ENCODE measurements at regions of chr18 and their contacts with region 1.

Region 1: GRCh38 chr18:34661464-34662111 is 48.5 kb upstream of the DTNA start:
- DNase-seq: peak; percentile 7
- H3K4me3 ChIP-seq: no peak overlapping the region
- H3K27ac ChIP-seq: no peak overlapping the region
- H3K27me3 ChIP-seq: no peaks in the 10 kb centered on the region
- CTCF ChIP-seq: peak; percentile 90

Region 2: GRCh38 chr18:34600118-34600517 is 61.5 kb before region 1 on chr18:
- CTCF ChIA-PET with region 1: interaction called, 12 read pairs
- POLR2A ChIA-PET with region 1: no interaction called
- DNase-seq: no peak
- H3K4me3 ChIP-seq: no peak overlapping the region
- H3K27ac ChIP-seq: no peak overlapping the region
- H3K27me3 ChIP-seq: no peaks in the 10 kb centered on the region
- CTCF ChIP-seq: no peak

Region 3: DNA sequence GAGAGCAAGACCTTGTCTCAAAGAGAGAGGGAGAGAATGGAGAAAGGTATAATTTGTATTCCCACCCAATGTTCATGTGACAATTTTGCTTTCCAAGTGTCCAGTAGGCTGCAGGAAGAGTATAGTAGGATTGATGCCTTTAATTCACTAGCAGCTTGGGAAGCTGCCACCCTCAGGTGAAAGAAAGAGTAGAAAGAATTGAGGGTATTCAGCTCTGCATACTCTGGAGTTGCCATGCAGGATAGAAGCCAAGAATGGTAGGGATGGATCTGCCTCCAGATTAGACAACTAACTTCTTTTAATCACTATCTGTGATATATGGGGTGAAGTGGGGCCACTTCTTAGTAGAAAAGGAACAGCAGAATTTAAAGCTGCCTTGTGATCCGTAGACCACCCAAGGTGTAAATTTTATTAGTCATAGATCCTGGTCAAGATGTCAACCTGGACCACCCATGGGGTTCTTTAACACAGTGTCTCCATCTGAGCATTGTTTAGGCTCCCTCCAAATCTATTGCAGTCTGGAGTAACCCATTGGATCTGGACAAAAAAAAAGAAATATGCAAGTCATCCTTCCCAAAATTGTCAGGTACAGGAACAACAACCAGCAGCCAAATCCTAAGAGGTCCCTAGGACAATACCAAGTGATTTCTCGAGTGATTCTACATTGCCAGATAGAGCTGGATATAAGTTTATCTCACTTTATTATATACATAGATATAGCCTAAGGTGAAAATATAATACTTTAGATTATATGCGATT is 15.4 kb after region 1 on chr18:
- CTCF ChIA-PET with region 1: interaction called, 84 read pairs
- POLR2A ChIA-PET with region 1: no interaction called
- DNase-seq: no peak
- H3K4me3 ChIP-seq: no peak overlapping the region
- H3K27ac ChIP-seq: no peak overlapping the region
- H3K27me3 ChIP-seq: no peaks in the 10 kb centered on the region
- CTCF ChIP-seq: no peak

Region 4: DNA sequence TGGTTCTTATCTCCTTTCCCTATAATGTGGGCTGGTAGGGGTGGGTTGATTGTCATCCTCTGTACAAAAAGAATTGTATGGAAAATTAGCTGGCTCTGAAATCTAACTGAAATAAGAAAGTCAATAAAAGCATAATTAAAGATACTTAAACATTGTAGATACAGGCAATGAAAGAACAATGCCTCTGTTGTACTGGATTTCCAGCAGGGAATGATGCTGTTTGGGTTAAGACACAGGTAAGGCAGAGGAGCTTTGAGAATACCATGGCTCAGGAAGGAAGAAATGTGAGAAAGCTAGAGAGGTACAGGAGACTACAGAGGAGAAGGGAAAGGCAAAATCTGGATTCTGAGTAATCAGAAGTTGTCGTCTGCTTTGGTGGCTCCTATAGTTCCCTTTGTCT is 58.6 kb after region 1 on chr18:
- CTCF ChIA-PET with region 1: interaction called, 17 read pairs
- POLR2A ChIA-PET with region 1: no interaction called
- DNase-seq: no peak
- H3K4me3 ChIP-seq: no peak overlapping the region
- H3K27ac ChIP-seq: no peak overlapping the region
- H3K27me3 ChIP-seq: no peaks in the 10 kb centered on the region
- CTCF ChIP-seq: no peak

Region 5: GRCh38 chr18:34752056-34752455 is 90.5 kb after region 1 on chr18:
- CTCF ChIA-PET with region 1: interaction called, 16 read pairs
- POLR2A ChIA-PET with region 1: no interaction called
- DNase-seq: no peak
- H3K4me3 ChIP-seq: no peak overlapping the region
- H3K27ac ChIP-seq: no peak overlapping the region
- H3K27me3 ChIP-seq: no peaks in the 10 kb centered on the region
- CTCF ChIP-seq: no peak

Region 6: DNA sequence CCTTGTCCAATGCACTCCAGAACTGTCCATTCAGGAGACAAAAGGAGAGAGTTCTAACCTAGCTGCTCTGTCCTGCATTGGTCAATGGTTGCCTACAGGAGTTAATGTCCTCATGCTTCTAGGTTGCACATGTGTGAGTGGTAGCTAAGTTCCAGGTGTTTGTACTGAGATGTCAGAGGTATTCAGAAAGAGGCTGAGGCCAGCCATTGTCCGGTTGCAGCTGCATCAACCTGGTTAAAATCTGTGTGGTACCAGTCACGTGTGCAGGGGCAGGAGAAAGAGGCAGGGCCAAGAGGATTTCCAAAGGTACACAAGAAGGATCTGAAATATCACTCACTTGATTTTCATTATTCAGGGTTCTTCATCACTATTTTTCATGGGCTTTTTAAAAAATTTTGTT is 119.3 kb after region 1 on chr18:
- CTCF ChIA-PET with region 1: interaction called, 199 read pairs
- POLR2A ChIA-PET with region 1: interaction called, 3 read pairs
- DNase-seq: no peak
- H3K4me3 ChIP-seq: no peak overlapping the region
- H3K27ac ChIP-seq: no peak overlapping the region
- H3K27me3 ChIP-seq: no peaks in the 10 kb centered on the region
- CTCF ChIP-seq: no peak

Region 7: GRCh38 chr18:34809451-34810072 is 148.0 kb after region 1 on chr18:
- CTCF ChIA-PET with region 1: interaction called, 20 read pairs
- POLR2A ChIA-PET with region 1: no interaction called
- DNase-seq: no peak
- H3K4me3 ChIP-seq: no peak overlapping the region
- H3K27ac ChIP-seq: no peak overlapping the region
- H3K27me3 ChIP-seq: no peaks in the 10 kb centered on the region
- CTCF ChIP-seq: peak; percentile 44

Region 8: GRCh38 chr18:34912010-34912721 is 250.6 kb after region 1 on chr18:
- CTCF ChIA-PET with region 1: no interaction called
- POLR2A ChIA-PET with region 1: no interaction called
- DNase-seq: peak; percentile 90
- H3K4me3 ChIP-seq: no peak overlapping the region
- H3K27ac ChIP-seq: peak overlapping the region; percentile 69
- H3K27me3 ChIP-seq: no peaks in the 10 kb centered on the region
- CTCF ChIP-seq: peak; percentile 42

Measured in AG04450 (cell line).